Colonic mucosa (tissue), 4 donors: ENCODE measurements at regions of chr20 and their contacts with region 1.

Region 1: DNA sequence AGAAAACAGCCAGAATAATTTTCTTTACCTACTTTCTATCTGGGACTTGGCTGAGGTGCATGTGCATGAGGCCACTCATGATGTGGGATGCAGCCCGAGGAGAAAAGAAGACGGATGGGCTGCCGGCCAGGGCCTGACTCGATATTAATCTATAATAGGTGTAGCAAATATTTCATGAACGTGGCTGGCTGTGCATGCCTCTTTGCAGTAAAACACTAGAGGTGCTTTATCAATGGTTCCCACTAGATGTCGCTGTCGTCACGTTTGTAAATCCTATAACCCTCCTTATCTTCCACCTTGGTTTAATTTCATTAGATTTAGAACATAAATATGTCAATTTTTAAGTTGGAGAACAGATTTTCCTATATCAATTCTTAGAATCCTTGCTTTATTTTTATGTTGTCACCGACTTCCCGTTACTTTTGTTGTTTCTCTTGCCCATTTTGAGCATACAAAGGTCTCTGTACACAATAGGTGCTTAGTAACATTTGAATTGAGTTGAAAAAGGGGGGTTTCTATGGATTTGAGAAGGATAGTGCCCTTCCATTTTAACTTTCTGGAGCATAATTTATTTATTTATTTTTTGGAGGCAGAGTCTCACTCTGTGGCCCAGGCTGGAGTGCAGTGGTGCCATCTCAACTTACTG is 19.6 kb upstream of the FERMT1 start:
- DNase-seq: peak; percentile 68
- H3K4me3 ChIP-seq: no peak overlapping the region
- H3K27ac ChIP-seq: no peak overlapping the region
- H3K4me1 ChIP-seq: no peaks in the 10 kb centered on the region
- H3K27me3 ChIP-seq: no peaks in the 10 kb centered on the region
- CTCF ChIP-seq: peak; percentile 72

Region 2: DNA sequence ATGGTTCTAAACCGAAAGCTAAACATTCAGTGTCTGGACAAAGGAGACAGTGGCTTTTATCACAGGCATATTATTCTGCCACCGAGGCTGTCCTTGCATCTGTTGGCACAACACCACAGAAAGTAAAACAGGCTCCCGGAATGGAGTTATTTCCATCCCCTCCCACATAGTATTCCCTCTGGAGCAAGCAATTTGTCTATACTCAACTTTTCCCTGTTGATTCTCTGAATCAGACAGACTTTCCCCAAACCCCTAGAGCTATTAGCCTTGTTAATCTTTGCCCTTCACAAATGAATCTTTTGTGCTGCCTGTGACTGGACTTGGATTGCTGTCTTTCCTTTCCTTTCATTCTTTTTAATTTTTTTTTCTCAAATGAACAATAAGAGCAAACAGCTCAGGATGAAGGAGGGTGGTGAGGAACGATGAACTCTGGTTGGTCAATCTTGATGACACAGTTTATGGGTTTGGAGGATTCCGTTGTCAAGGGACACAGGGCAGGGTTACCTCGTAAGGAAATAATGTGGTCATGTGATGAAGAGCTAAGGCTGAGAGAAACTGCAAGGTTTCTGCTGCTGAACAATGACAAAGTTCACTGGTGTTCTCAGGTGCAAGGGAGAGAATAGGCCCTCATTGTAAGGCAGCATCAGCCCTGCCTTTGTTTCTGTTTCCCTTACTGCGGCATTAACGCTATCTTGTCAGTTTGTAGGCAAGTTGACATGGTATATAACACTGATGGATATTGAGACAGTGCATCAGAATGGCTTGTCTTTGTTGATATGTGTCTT is 350.0 kb after region 1 on chr20:
- intact Hi-C with region 1: no loop called
- DNase-seq: peak; percentile 25
- H3K4me3 ChIP-seq: no peak overlapping the region
- H3K27ac ChIP-seq: no peak overlapping the region
- H3K4me1 ChIP-seq: no peaks in the 10 kb centered on the region
- H3K27me3 ChIP-seq: no peaks in the 10 kb centered on the region
- CTCF ChIP-seq: no peak

Region 3: DNA sequence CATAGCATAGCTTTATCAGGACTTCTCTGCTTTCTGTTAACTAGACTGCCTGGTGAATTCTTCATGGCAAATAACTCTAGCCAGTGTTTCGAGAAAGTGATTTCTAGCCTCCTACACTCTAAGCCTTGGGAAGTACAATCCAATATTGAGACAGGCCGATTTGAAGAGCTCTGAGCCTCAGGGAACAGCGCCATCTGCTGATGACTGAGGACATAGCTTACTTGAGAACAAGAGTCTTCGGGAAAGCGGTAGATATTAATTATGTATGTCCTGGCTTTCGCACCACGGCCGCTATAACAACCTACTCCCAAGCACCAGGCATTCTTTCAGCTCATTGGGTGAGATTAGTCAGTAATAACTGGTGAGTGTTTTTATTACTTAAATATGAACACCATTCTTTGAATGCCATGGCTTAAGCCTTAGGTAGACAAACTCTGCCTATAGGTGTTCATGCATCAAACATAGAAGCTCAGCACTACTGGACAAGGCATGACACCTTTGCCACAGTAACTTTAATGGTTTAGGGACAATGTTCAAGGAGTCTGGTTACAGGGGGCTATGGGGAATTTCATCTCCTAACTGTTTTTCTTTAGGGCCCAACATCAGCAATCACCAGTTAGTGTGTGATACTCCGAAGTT is 1143.6 kb after region 1 on chr20:
- intact Hi-C with region 1: loop called (anchors 10 kb)
- DNase-seq: peak; percentile 72
- H3K4me3 ChIP-seq: no peak overlapping the region
- H3K27ac ChIP-seq: no peak overlapping the region
- H3K4me1 ChIP-seq: no peaks in the 10 kb centered on the region
- H3K27me3 ChIP-seq: no peaks in the 10 kb centered on the region
- CTCF ChIP-seq: peak; percentile 79

Region 4: GRCh38 chr20:7375905-7376304 is 1233.4 kb after region 1 on chr20:
- intact Hi-C with region 1: loop called (anchors 10 kb)
- DNase-seq: no peak
- H3K4me3 ChIP-seq: no peak overlapping the region
- H3K27ac ChIP-seq: no peak overlapping the region
- H3K4me1 ChIP-seq: no peaks in the 10 kb centered on the region
- H3K27me3 ChIP-seq: no peaks in the 10 kb centered on the region
- CTCF ChIP-seq: peak; percentile 30